ENCODE measurements at regions of chr17 and their contacts with region 1.

Region 1: GRCh38 chr17:36601303-36602029 is at the start of gene MRM1:
- DNase-seq: peak; percentile 94
- H3K4me3 Mint-ChIP-seq: peak within 1 kb of the TSS; percentile 86
- H3K27ac Mint-ChIP-seq: peak within 1 kb of the TSS; percentile 92
- H3K4me1 Mint-ChIP-seq: peaks cover 39% of the 10 kb centered on the region
- H3K27me3 Mint-ChIP-seq: no peaks in the 10 kb centered on the region

Region 2: GRCh38 chr17:37047631-37048104 is 446.2 kb after region 1 on chr17:
- CTCF ChIA-PET with region 1: interaction called, 16 read pairs
- DNase-seq: peak; percentile 86
- H3K4me3 Mint-ChIP-seq: no peak overlapping the region
- H3K27ac Mint-ChIP-seq: peak overlapping the region; percentile 49
- H3K4me1 Mint-ChIP-seq: peaks cover 10% of the 10 kb centered on the region
- H3K27me3 Mint-ChIP-seq: no peaks in the 10 kb centered on the region